K562 (cell line): ENCODE measurements at regions of chr4 and their contacts with region 1.

Region 1: GRCh38 chr4:174873931-174874330 is 44.2 kb upstream of the ADAM29 start:
- DNase-seq: peak; percentile 7 to 24 (median 14)
- ATAC-seq: peak; percentile 40; the same call in 1 of the 3 replicates
- H3K4me3 ChIP-seq: no peak overlapping the region
- H3K27ac ChIP-seq: no peak overlapping the region
- H3K4me1 ChIP-seq: no peaks in the 10 kb centered on the region
- H3K27me3 ChIP-seq: no peaks in the 10 kb centered on the region
- CTCF ChIP-seq: peak; percentile 11 to 28 (median 15); a peak in 2 of 6 replicates
- EP300 ChIP-seq: no peak
- POLR2A ChIP-seq: no peak
- RAD21 ChIP-seq: no peak

Region 2: DNA sequence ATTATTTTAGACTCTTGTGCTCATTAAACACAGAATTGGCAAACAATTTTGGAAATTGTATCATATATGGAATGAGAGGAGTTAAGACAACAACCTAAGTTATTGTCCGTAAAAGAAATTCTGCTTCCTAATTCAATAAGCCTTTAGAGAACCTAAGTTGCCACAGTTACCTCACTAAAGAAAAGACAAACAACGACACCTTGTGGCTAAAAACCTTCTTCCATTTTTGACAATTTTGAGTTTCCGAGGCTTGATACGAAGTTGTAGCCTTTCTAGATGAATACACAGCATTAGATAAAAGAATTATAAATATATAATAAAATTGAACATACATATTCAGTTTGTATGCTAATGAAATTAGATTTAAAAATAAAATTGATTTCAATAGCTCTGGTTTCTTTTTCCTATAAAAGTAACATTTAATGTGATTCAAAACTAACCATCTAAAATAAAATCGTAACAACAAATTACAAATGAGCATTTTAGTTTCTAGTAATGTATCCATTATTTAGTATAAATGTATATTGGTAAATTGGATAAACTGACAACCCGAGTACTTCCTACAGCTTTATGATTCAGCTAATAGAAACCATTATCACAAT is 663.0 kb after region 1 on chr4:
- CTCF ChIA-PET with region 1: no interaction called
- POLR2A ChIA-PET with region 1: no interaction called
- in situ Hi-C with region 1: no loop called
- intact Hi-C with region 1: loop called (anchors 10 kb)
- DNase-seq: peak; percentile 10 to 30 (median 20)
- ATAC-seq: no peak
- H3K4me3 ChIP-seq: no peak overlapping the region
- H3K27ac ChIP-seq: no peak overlapping the region
- H3K4me1 ChIP-seq: no peaks in the 10 kb centered on the region
- H3K27me3 ChIP-seq: no peaks in the 10 kb centered on the region
- CTCF ChIP-seq: peak in 1 of 3 experiments; percentile 41; a peak in 2 of 6 replicates
- EP300 ChIP-seq: no peak
- POLR2A ChIP-seq: no peak
- RAD21 ChIP-seq: peak; percentile 46 to 50